Activated CD4-positive, alpha-beta T cell treated with anti-CD3 and anti-CD28 coated beads, Interleukin-2, amount 10 ng/mL, durations not matched to agents 24 days and 14 days (primary cell): ENCODE measurements at regions of chr3 and their contacts with region 1.

Region 1: DNA sequence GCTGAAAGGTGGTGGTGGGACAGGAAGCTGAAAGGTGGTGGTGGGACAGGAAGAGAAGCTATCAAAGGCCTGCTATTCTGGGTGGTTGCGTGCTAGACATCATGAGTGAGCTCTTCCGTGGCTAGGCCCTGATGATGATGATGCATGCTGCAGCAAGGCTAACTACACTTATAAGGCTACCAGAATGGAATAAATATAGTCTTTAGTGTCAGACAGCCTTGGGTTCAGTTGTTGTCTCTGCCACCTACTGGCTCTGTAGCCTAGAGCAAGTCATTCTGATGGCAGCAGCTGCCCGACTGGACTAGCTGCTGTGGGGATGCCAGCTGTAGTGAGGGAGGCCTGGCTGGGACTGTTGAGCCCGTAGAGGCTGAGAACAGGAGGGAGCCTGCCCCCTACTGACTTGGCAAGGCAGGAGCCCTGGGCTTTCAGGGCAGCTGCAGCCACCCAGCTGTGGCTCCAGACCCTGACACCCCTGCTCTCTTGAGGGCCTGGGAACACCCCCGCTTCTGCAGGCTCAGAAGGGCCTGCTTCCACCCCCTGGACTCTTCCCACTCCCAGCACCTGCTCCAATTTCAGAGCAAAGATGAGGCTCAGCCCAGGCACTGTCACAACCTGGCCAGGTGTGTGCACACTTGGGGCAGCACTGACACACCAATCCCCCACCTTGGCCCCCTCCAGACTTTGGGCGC is 21.4 kb upstream of the ZBED2 start:
- DNase-seq: peak; percentile 88
- H3K4me3 Mint-ChIP-seq: peak overlapping the region; percentile 59
- H3K27ac Mint-ChIP-seq: peak overlapping the region; percentile 92
- H3K4me1 Mint-ChIP-seq: peaks cover 71% of the 10 kb centered on the region
- H3K27me3 Mint-ChIP-seq: no peaks in the 10 kb centered on the region

Region 2: GRCh38 chr3:111547631-111548030 is 68.9 kb before region 1 on chr3:
- intact Hi-C with region 1: loop called (anchors 1 kb)
- DNase-seq: peak; percentile 87
- H3K4me3 Mint-ChIP-seq: no peak overlapping the region
- H3K27ac Mint-ChIP-seq: no peak overlapping the region
- H3K4me1 Mint-ChIP-seq: peaks cover 46% of the 10 kb centered on the region
- H3K27me3 Mint-ChIP-seq: no peaks in the 10 kb centered on the region

Region 3: DNA sequence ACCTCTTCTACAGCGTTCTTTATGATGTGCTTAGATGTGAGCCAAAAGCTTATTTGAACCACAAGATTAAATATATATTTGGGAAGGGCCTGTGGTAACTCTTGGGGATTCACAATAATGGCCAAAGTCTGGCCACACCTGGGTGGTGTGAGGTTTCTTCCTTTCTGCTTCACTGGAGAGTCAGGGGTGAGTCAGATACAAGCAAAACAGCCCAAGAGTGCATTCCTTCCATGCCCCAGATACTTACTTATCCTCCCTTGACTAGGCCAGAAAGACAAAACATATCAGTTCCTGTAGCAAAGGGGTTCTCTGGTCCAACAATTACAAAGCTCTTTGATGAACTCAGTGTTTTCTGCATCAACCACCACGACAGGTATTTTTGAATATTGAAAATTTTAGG is 22.4 kb before region 1 on chr3:
- intact Hi-C with region 1: loop called (anchors 1 kb)
- DNase-seq: peak; percentile 67
- H3K4me3 Mint-ChIP-seq: peak overlapping the region; percentile 96
- H3K27ac Mint-ChIP-seq: peak overlapping the region; percentile 96
- H3K4me1 Mint-ChIP-seq: peaks cover 57% of the 10 kb centered on the region
- H3K27me3 Mint-ChIP-seq: no peaks in the 10 kb centered on the region

Region 4: GRCh38 chr3:111668912-111669488 is 52.4 kb after region 1 on chr3:
- intact Hi-C with region 1: loop called (anchors 1 kb)
- DNase-seq: peak; percentile 69
- H3K4me3 Mint-ChIP-seq: peak overlapping the region; percentile 22
- H3K27ac Mint-ChIP-seq: peak overlapping the region; percentile 73
- H3K4me1 Mint-ChIP-seq: peaks cover 69% of the 10 kb centered on the region
- H3K27me3 Mint-ChIP-seq: no peaks in the 10 kb centered on the region

Region 5: GRCh38 chr3:111717601-111718000 is 101.0 kb after region 1 on chr3:
- intact Hi-C with region 1: no loop called
- DNase-seq: peak; percentile 87
- H3K4me3 Mint-ChIP-seq: no peak overlapping the region
- H3K27ac Mint-ChIP-seq: no peak overlapping the region
- H3K4me1 Mint-ChIP-seq: peaks cover 5% of the 10 kb centered on the region
- H3K27me3 Mint-ChIP-seq: no peaks in the 10 kb centered on the region

Region 6: GRCh38 chr3:111864821-111865656 is 248.5 kb after region 1 on chr3:
- intact Hi-C with region 1: no loop called
- DNase-seq: no peak
- H3K4me3 Mint-ChIP-seq: no peak overlapping the region
- H3K27ac Mint-ChIP-seq: no peak overlapping the region
- H3K4me1 Mint-ChIP-seq: peaks cover 13% of the 10 kb centered on the region
- H3K27me3 Mint-ChIP-seq: peaks cover 49% of the 10 kb centered on the region